ENCODE measurements at regions of chr10 and their contacts with region 1.

Region 1: GRCh38 chr10:110803830-110804338 is 67.8 kb upstream of the PDCD4 start:
- DNase-seq: peak; percentile 72
- H3K4me3 Mint-ChIP-seq: peak overlapping the region; percentile 23
- H3K27ac Mint-ChIP-seq: peak overlapping the region; percentile 17
- H3K4me1 Mint-ChIP-seq: peaks cover 38% of the 10 kb centered on the region
- H3K27me3 Mint-ChIP-seq: no peaks in the 10 kb centered on the region

Region 2: GRCh38 chr10:110733218-110733952 is 70.5 kb before region 1 on chr10:
- intact Hi-C with region 1: no loop called
- DNase-seq: no peak
- H3K4me3 Mint-ChIP-seq: peak overlapping the region; percentile 9
- H3K27ac Mint-ChIP-seq: no peak overlapping the region
- H3K4me1 Mint-ChIP-seq: peaks cover 7% of the 10 kb centered on the region
- H3K27me3 Mint-ChIP-seq: peaks cover 45% of the 10 kb centered on the region

Region 3: DNA sequence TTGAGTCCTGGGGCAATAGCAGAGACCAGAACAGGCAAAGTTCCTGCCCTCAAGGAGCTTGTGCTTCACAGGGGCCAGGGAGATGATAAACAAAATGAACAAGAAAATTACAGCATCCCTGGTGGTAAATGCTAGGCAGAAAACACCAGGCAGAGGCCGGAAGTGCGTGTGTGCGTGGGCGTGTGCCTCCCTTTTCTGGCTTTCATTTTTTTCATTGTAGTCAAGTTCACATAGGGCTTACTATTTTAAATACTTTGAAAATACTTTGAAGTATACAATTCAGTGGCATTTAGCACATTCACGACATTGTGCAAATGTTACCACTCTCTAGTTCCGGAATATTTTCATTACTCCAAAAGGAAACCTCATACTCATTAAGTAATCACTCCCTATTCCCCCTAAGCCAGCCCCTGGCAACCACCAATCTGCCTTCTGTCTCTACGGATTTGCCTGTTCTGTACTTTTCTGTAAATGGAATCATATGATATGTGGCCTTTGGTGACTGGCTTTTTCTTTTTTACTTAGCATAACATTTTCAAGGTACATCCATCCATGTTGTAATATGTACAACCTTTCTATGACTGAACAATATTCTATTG is 20.3 kb before region 1 on chr10:
- intact Hi-C with region 1: no loop called
- DNase-seq: peak; percentile 90
- H3K4me3 Mint-ChIP-seq: peak overlapping the region; percentile 15
- H3K27ac Mint-ChIP-seq: peak overlapping the region; percentile 89
- H3K4me1 Mint-ChIP-seq: peaks cover 42% of the 10 kb centered on the region
- H3K27me3 Mint-ChIP-seq: no peaks in the 10 kb centered on the region

Region 4: DNA sequence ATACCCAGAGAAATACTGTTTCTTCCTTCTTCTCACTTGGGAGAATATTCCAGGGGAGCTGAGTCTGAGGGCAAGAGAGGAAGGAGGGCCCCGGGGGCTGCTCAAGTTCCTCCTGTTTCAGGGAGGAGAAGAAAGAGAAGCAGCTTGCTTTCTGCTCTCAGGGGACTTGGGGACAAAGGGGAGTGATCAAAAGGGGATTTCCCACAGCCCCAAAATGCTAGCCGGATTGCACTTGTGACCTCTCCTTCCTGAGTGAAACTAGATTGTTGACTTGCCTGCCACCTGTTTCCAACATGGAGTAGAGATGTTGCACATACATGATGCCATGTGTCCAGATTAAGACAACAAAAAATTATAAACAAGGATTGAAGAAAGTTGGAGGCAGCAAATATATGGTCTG is 39.1 kb after region 1 on chr10:
- intact Hi-C with region 1: loop called (anchors 5 kb)
- DNase-seq: peak; percentile 90
- H3K4me3 Mint-ChIP-seq: peak overlapping the region; percentile 30
- H3K27ac Mint-ChIP-seq: peak overlapping the region; percentile 82
- H3K4me1 Mint-ChIP-seq: peaks cover 49% of the 10 kb centered on the region
- H3K27me3 Mint-ChIP-seq: no peaks in the 10 kb centered on the region

Region 5: GRCh38 chr10:110893559-110894179 is 89.8 kb after region 1 on chr10:
- intact Hi-C with region 1: loop called (anchors 1 kb)
- DNase-seq: peak; percentile 61
- H3K4me3 Mint-ChIP-seq: no peak overlapping the region
- H3K27ac Mint-ChIP-seq: no peak overlapping the region
- H3K4me1 Mint-ChIP-seq: peaks cover 9% of the 10 kb centered on the region
- H3K27me3 Mint-ChIP-seq: no peaks in the 10 kb centered on the region